Calu3 (cell line): ENCODE measurements at regions of chr12 and their contacts with region 1.

Region 1: DNA sequence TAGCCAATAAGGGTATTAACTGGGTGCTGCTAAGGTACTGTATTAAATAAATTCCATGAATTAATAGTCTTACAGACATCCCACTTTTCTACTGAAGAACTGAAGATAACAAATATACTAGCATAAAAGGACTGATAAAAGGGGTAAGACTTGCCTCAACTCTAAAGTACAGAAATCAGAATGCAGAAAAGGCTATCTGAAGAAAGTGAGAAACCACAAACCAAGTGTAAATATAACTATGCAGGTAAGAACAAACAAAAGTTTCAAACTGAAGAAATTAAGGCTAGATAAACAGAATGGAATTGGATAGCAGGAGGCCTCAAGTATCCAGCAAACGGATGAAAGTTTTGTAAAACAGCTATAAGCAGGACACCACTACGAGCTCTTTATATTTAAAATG is 29.5 kb downstream of the YAF2 start:
- DNase-seq: no peak
- H3K4me3 Mint-ChIP-seq: no peak overlapping the region
- H3K27ac Mint-ChIP-seq: no peak overlapping the region
- H3K4me1 Mint-ChIP-seq: no peaks in the 10 kb centered on the region
- H3K27me3 Mint-ChIP-seq: no peaks in the 10 kb centered on the region
- CTCF ChIP-seq: no peak

Region 2: GRCh38 chr12:42104087-42104486 is 104.5 kb before region 1 on chr12:
- CTCF ChIA-PET with region 1: no interaction called
- intact Hi-C with region 1: no loop called
- DNase-seq: no peak
- H3K4me3 Mint-ChIP-seq: no peak overlapping the region
- H3K27ac Mint-ChIP-seq: no peak overlapping the region
- H3K4me1 Mint-ChIP-seq: no peaks in the 10 kb centered on the region
- H3K27me3 Mint-ChIP-seq: no peaks in the 10 kb centered on the region
- CTCF ChIP-seq: no peak

Region 3: DNA sequence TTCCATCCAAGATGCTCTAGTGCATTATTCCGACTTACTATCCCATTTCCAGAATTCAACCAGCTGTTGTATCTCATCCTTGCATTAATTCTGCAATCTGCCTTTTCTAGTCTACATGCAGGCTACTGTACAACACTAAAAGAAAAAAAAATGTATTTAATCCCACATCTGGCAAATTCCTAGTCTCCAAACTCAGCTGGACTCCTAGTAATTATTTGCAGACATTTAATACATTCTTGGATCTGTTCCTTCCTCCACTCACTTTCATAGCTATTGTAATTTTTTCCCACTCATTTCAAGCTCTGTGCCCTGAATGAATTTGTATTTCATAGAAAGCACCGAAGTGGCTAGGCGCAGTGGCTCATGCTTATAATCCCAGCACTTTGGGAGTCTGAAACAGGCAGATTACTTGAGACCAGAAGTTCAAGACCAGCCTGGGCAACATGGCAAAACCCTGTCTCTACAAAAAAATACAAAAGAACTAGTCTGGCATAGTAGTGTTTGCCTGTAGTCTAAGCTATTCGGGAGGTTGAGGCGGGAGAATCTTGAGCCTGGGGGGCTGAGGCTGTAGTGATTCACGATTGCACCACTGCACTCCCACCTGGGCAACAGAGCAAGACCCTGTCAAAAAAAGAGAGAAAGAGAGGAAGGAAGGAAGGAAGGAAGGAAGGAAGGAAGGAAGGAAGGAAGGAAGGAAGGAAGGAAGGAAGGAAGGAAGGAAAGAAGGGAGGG is 69.0 kb after region 1 on chr12:
- CTCF ChIA-PET with region 1: no interaction called
- intact Hi-C with region 1: no loop called
- DNase-seq: no peak
- H3K4me3 Mint-ChIP-seq: no peak overlapping the region
- H3K27ac Mint-ChIP-seq: no peak overlapping the region
- H3K4me1 Mint-ChIP-seq: no peaks in the 10 kb centered on the region
- H3K27me3 Mint-ChIP-seq: no peaks in the 10 kb centered on the region
- CTCF ChIP-seq: no peak

Region 4: DNA sequence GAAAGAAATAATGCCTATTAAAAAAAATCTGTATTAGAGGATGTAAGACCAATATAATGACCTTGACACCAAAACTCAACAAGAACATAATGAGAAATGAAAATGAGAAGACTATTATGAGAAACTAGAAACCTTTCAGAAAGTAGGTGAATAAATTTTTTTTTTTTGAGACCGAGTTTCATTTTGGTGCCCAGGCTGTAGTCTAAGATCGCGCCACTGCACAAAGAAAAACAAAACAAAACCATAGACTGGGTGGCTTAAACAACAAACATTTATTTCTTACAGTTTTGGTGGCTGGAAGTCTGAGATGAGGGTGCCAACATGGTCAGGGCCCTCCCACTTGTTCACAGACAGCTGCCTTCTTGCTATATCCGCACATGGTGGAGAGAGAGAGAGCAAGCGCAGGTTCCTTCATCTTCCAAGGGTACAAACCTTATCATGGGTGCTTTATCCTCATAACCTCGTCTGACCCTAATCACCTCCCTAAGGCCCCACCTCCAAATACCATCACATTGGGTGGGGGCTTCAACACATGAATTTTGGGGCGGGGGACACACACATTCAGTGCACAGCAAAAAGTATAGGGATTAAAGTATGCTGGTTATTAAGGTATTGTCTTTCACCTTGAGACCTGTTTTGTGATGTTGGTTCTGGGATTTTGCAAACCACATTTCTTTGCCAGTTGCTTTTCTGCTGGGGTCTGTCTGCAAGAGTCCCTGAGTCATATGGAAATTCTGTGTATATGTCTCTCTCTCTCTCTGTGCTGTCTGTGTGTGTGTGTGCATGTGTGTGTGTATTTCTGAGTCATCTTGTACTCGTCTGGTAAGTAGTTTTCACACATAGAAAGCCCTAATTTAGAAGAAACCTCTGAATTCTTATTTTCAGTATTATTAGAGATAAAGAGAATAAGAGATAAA is 91.1 kb after region 1 on chr12:
- CTCF ChIA-PET with region 1: interaction called, 10 read pairs
- intact Hi-C with region 1: no loop called
- DNase-seq: no peak
- H3K4me3 Mint-ChIP-seq: no peak overlapping the region
- H3K27ac Mint-ChIP-seq: no peak overlapping the region
- H3K4me1 Mint-ChIP-seq: peaks cover 9% of the 10 kb centered on the region
- H3K27me3 Mint-ChIP-seq: no peaks in the 10 kb centered on the region
- CTCF ChIP-seq: no peak

Region 5: GRCh38 chr12:42741771-42742510 is 533.4 kb after region 1 on chr12:
- CTCF ChIA-PET with region 1: no interaction called
- intact Hi-C with region 1: no loop called
- DNase-seq: no peak
- H3K4me3 Mint-ChIP-seq: no peak overlapping the region
- H3K27ac Mint-ChIP-seq: no peak overlapping the region
- H3K4me1 Mint-ChIP-seq: peaks cover 18% of the 10 kb centered on the region
- H3K27me3 Mint-ChIP-seq: no peaks in the 10 kb centered on the region
- CTCF ChIP-seq: no peak